Activated CD4-positive, alpha-beta T cell treated with anti-CD3 and anti-CD28 coated beads, Interleukin-2, amount 10 ng/mL, durations not matched to agents 24 days and 14 days (primary cell): ENCODE measurements at regions of chr2 and their contacts with region 1.

Region 1: DNA sequence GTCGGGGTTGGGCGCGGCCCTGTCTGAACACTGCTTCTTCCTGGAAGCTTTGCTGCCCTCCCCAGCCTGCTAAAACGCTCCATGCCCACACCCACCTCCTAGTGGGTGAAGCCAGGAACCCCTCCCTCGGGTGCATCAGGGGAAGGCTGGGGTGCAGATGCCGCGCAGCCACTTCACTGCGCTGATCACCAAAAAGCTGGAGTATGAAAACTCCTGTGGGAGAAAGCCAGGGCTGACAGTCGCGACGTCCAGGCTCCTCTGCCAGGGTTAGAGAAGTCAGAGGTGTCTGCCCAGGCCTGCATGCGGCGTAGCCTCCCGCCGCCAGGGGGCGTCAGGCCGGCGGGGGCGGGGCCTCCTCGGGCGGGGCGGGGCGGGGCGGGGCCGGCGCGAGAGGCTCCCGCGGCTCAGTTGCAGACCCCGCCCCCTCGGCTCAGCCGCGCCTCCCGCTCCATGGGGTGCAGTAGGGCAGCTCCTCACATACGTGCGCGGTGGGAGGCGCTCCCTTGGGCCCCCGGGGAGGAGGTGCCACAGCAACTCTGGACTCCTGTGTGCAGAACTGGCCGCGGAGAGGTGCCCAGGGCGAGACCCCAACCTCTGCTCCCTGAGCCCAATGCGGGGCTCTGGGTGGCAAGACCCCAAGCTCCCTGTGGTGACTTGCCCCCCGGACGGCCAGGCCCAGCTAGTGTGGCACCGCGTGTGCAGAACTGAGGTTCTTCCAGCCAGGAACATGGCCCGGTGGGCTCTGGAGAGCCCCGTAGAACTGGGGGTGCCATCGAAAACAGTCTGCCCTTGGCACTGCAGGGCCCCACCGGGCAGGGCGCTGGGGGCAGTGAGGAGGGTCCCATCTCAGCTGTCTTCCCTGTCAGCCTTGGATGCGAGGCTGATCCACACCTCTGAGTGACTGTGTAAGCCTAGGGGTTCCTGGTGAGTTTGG is 1.8 kb upstream of the RNPEPL1 start:
- DNase-seq: peak; percentile 99
- H3K4me3 Mint-ChIP-seq: peak overlapping the region; percentile 98
- H3K27ac Mint-ChIP-seq: peak overlapping the region; percentile 99
- H3K4me1 Mint-ChIP-seq: peaks cover 63% of the 10 kb centered on the region
- H3K27me3 Mint-ChIP-seq: no peaks in the 10 kb centered on the region

Region 2: DNA sequence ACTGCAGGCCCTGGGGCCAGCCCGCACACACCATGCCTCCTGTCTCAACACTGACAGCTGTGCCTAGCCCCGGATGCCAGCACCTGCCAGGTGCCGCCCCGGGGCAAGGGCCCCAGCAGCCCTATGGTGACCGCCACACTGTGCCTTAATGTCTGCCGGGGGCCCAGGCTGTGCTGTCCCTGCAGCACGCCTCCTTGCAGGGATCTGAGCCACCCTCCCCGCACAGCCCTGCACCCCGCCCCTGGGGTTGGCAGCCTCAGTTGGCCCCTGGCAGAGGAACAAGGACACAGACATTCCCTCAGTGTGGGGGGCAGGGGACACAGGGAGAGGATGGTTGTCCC is 11.6 kb after region 1 on chr2:
- intact Hi-C with region 1: loop called (anchors 1 kb)
- DNase-seq: no peak
- H3K4me3 Mint-ChIP-seq: no peak overlapping the region
- H3K27ac Mint-ChIP-seq: no peak overlapping the region
- H3K4me1 Mint-ChIP-seq: peaks cover 13% of the 10 kb centered on the region
- H3K27me3 Mint-ChIP-seq: no peaks in the 10 kb centered on the region

Region 3: DNA sequence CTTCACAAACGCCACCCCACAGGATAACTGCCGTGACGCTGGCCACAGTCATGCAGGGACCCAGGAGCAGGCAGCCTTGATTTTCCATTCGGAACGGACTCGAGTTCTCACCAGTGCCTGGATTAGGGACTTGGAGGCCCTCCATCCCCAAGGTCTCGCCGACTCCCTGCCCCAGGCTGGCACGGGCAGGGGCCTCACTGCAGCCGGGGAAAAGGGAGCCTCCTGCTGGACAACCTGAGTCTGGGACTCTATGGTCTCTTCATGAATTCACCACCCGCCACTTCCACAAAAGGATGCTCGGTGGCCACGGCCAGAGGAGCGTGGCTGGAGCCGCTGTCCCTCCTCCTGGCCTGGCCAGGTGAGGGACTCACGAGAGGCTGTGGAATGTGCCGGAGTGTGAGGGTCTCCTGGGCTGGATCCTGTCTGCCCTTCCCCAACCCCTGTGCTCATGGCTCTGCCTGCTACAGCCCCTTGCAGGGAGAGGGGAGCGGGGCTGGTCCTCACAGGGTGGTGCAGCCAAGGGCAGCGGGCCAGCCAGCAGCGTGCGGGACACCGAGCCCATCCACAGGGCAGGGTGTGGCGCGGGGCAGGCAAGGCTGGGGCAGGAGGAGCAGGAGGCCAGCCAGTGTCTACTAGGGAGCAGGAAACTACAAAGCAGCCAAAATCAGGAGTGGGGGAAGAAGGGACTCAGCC is 167.5 kb after region 1 on chr2:
- intact Hi-C with region 1: no loop called
- DNase-seq: peak; percentile 67
- H3K4me3 Mint-ChIP-seq: no peak overlapping the region
- H3K27ac Mint-ChIP-seq: no peak overlapping the region
- H3K4me1 Mint-ChIP-seq: no peaks in the 10 kb centered on the region
- H3K27me3 Mint-ChIP-seq: no peaks in the 10 kb centered on the region